Activated CD8-positive, alpha-beta T cell treated with anti-CD3 and anti-CD28 coated beads, Interleukin-2, amount 10 ng/mL, durations not matched to agents 7 days and 5 days (primary cell): ENCODE measurements at regions of chr2 and their contacts with region 1.

Region 1: GRCh38 chr2:143284087-143284675 is 155.0 kb downstream of the ARHGAP15 start:
- DNase-seq: peak; percentile 50
- ATAC-seq: no peak
- H3K4me3 Mint-ChIP-seq: no peak overlapping the region
- H3K27ac Mint-ChIP-seq: no peak overlapping the region
- H3K4me1 Mint-ChIP-seq: peaks cover 13% of the 10 kb centered on the region
- H3K27me3 Mint-ChIP-seq: no peaks in the 10 kb centered on the region

Region 2: DNA sequence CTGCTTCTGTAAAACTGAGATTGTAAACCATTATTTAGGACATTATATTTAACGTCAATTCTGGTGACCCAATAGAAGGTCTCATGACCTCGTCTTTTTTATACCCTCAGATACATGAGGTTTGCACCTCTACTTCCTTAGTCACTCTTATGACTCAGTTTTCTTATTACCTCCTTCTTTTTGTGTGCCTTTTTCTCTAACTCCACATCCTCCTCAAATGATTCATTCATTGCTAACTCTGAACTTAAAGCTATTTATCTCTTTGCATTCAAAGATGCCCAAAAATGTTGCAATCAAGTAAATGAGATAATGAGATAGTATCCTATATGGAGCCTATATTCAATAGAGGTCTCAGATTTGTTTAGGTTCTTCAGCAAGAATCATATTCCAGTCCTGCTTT is 527.8 kb before region 1 on chr2:
- CTCF ChIA-PET with region 1: no interaction called
- POLR2A ChIA-PET with region 1: no interaction called
- DNase-seq: no peak
- ATAC-seq: no peak
- H3K4me3 Mint-ChIP-seq: no peak overlapping the region
- H3K27ac Mint-ChIP-seq: no peak overlapping the region
- H3K4me1 Mint-ChIP-seq: no peaks in the 10 kb centered on the region
- H3K27me3 Mint-ChIP-seq: no peaks in the 10 kb centered on the region

Region 3: DNA sequence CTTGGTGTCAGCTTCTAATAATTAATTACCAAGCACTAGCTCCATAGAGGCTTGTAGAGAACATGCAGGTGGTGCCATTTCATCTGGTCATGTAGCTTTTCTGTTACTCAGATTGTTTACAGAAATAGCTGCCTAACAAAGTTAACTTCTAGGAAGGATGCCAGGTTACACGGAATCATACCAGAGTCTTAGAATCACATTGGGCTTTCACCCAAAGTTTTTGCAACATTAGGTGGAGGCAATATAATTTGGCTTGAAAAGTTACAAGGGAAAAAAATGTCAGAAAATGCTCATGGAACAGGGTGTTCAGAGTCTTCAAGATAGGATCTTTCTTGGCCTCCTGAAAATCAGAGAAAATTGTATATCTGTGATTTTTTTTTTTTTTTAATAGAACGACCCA is 19.3 kb before region 1 on chr2:
- CTCF ChIA-PET with region 1: interaction called, 96 read pairs
- POLR2A ChIA-PET with region 1: interaction called, 3 read pairs
- DNase-seq: no peak
- ATAC-seq: no peak
- H3K4me3 Mint-ChIP-seq: no peak overlapping the region
- H3K27ac Mint-ChIP-seq: no peak overlapping the region
- H3K4me1 Mint-ChIP-seq: peaks cover 35% of the 10 kb centered on the region
- H3K27me3 Mint-ChIP-seq: no peaks in the 10 kb centered on the region

Region 4: DNA sequence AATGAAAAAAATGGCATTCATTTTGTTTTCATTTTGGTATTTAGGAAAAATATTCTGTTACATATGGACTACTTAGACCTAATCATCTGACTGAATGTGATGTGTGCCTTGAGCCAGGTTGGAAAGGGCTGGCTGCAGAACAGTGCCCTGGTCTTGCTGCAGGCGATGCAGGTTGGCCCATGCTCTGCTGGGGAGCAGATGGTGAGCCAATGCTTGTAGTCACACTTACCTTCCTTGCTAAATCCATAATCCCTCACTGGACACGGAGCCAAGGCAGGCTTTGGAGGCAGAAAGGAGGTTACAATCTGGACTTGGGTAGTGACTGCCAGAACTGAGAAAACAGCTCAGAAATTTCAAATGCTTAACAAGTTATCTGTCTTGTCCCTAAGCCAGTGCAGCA is 73.8 kb after region 1 on chr2:
- CTCF ChIA-PET with region 1: no interaction called
- POLR2A ChIA-PET with region 1: no interaction called
- DNase-seq: no peak
- ATAC-seq: no peak
- H3K4me3 Mint-ChIP-seq: no peak overlapping the region
- H3K27ac Mint-ChIP-seq: no peak overlapping the region
- H3K4me1 Mint-ChIP-seq: no peaks in the 10 kb centered on the region
- H3K27me3 Mint-ChIP-seq: no peaks in the 10 kb centered on the region

Region 5: GRCh38 chr2:143382573-143382972 is 98.4 kb after region 1 on chr2:
- CTCF ChIA-PET with region 1: no interaction called
- POLR2A ChIA-PET with region 1: no interaction called
- DNase-seq: no peak
- ATAC-seq: no peak
- H3K4me3 Mint-ChIP-seq: no peak overlapping the region
- H3K27ac Mint-ChIP-seq: no peak overlapping the region
- H3K4me1 Mint-ChIP-seq: no peaks in the 10 kb centered on the region
- H3K27me3 Mint-ChIP-seq: no peaks in the 10 kb centered on the region

Region 6: GRCh38 chr2:143870696-143871095 is 586.5 kb after region 1 on chr2:
- CTCF ChIA-PET with region 1: no interaction called
- POLR2A ChIA-PET with region 1: no interaction called
- DNase-seq: no peak
- ATAC-seq: no peak
- H3K4me3 Mint-ChIP-seq: no peak overlapping the region
- H3K27ac Mint-ChIP-seq: no peak overlapping the region
- H3K4me1 Mint-ChIP-seq: no peaks in the 10 kb centered on the region
- H3K27me3 Mint-ChIP-seq: no peaks in the 10 kb centered on the region